ENCODE measurements at regions of chr17 and their contacts with region 1.

Region 1: GRCh38 chr17:51299859-51300258 is 39.5 kb downstream of the UTP18 start:
- DNase-seq: no peak
- H3K4me3 ChIP-seq: no peak overlapping the region
- H3K27ac ChIP-seq: no peak overlapping the region
- H3K4me1 ChIP-seq: no peaks in the 10 kb centered on the region
- H3K27me3 ChIP-seq: no peaks in the 10 kb centered on the region
- CTCF ChIP-seq: no peak

Region 2: DNA sequence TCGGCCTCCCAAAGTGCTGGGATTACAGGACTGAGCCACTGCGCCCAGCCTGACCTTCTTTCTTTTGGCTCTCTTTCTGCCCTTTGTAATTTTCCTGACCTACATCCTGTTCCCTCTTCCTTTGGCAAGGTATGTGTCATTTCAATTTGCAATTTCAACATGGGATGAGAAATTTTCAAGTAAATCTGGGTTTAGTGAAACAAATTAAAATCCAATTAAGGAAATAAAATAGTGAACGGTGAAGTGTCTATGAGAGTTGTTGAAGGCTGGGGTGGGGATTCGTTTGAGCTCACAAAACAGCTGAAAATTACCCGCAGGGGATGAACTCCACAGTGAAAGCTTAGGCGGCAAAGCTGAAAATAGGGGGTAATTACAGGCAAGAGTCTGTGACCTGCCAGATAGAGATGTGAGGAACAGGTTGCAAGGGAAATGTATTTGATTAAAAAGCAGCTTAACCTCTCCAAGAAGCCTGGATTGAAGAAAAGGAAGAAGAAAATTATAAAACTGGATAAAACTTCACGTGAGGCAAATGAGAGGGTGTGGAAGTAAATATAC is 238.2 kb after region 1 on chr17:
- intact Hi-C with region 1: loop called (anchors 5 kb)
- DNase-seq: no peak
- H3K4me3 ChIP-seq: no peak overlapping the region
- H3K27ac ChIP-seq: no peak overlapping the region
- H3K4me1 ChIP-seq: no peaks in the 10 kb centered on the region
- H3K27me3 ChIP-seq: no peaks in the 10 kb centered on the region
- CTCF ChIP-seq: no peak

Measured in ascending aorta (tissue), 2 donors.